MCF 10A (cell line): ENCODE measurements at regions of chr9 and their contacts with region 1.

Region 1: DNA sequence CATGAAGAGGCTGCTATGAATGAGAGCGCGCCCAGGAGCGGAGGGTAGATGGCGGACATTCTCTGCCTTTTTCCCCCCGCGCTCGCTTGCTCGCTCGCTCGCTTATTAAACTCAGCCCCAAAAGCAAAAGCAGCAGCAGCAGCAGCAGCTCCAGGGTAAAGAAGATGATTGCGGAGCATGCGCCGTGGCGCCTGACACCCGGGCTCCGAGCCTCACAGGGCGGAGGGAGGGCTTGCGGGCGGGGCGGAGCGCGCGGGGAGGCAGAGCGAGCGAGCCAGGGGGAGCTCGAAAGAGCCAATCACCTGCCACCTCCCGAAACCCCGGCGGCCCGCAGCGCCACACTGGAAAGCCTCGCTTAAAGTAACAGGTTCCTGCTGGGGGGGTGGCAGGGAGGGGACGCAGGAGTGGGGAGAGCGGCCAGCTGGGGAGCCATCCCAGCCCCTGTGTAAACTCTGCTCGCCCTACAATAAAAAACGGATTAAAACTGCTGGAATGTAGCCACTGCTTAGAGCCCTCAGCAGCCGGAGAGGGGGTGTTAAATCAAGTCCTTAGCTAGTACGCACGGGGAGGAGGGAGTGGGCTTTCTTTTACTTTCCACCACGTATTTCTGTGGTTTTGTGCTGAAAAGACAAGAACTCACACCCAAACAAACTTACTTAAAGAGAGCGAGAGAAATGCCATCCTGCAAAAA is at the start of gene MLLT3:
- DNase-seq: peak; percentile 90
- H3K4me3 Mint-ChIP-seq: peak within 1 kb of the TSS; percentile 81
- H3K27ac Mint-ChIP-seq: peak within 1 kb of the TSS; percentile 42
- H3K4me1 Mint-ChIP-seq: peaks cover 20% of the 10 kb centered on the region
- H3K27me3 Mint-ChIP-seq: peaks cover 50% of the 10 kb centered on the region
- CTCF ChIP-seq: no peak
- total RNA-seq, gene MLLT3: 0.66 and 1.2 TPM in 2 replicates

Region 2: DNA sequence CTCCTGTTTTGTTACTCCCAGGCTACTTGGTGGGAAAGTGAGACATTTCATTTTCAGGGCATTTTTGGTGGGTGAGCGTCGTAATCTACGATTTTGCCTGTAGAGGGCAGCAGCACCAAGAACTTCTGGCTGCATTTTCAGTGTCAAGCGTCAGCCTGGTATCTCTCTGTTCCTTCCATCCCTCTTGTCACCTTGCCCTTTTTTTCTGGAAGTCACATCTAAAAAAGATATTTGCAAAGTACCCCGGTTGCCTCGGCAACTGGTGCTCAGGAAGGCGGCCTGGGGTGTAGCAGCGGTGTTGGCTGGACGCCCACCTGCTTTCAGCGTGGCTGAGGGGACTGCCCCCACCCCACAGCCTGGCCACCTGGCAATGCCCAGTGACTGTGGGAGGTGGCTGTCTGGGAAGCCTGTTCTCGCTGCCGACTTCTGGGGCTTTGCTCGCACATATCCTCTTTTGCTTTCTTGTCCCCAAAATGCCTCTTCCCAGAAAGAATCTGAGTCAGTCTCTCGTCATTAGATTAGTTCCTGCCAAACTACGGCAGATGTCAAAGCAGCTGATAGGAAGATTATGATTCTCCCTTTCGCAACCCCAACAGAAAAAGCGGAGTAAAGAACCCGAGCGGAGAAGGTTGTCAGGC is 1129.2 kb before region 1 on chr9:
- CTCF ChIA-PET with region 1: no interaction called
- POLR2A ChIA-PET with region 1: no interaction called
- intact Hi-C with region 1: loop called (anchors 10 kb)
- DNase-seq: peak; percentile 67
- H3K4me3 Mint-ChIP-seq: peak overlapping the region; percentile 72
- H3K27ac Mint-ChIP-seq: no peak overlapping the region
- H3K4me1 Mint-ChIP-seq: peaks cover 16% of the 10 kb centered on the region
- H3K27me3 Mint-ChIP-seq: peaks cover 19% of the 10 kb centered on the region
- CTCF ChIP-seq: peak; percentile 81

Region 3: GRCh38 chr9:20356403-20357035 is 266.0 kb before region 1 on chr9:
- CTCF ChIA-PET with region 1: interaction called, 10 read pairs
- POLR2A ChIA-PET with region 1: interaction called, 4 read pairs
- intact Hi-C with region 1: loop called (anchors 1 kb)
- DNase-seq: peak; percentile 70
- H3K4me3 Mint-ChIP-seq: no peak overlapping the region
- H3K27ac Mint-ChIP-seq: no peak overlapping the region
- H3K4me1 Mint-ChIP-seq: peaks cover 8% of the 10 kb centered on the region
- H3K27me3 Mint-ChIP-seq: no peaks in the 10 kb centered on the region
- CTCF ChIP-seq: peak; percentile 76

Region 4: DNA sequence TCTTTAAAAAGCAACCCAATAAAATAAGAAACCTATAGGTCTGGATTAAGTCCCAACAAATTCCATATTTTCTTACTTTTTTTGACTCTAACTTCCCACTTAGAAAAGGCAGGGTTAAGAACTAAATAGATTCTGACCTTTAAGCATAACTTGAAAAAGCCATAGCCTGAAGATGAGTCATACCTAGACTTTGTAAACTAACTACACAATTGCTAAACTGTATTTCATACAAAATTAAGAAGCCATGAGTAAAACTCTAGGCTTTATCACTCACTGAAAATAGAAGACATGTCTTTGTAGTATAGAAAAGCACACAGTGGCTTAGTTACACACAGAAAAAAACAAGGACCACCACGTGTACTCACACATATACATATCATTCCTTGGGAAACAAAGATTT is 51.7 kb before region 1 on chr9:
- CTCF ChIA-PET with region 1: no interaction called
- POLR2A ChIA-PET with region 1: no interaction called
- intact Hi-C with region 1: no loop called
- DNase-seq: peak; percentile 17
- H3K4me3 Mint-ChIP-seq: no peak overlapping the region
- H3K27ac Mint-ChIP-seq: no peak overlapping the region
- H3K4me1 Mint-ChIP-seq: no peaks in the 10 kb centered on the region
- H3K27me3 Mint-ChIP-seq: peaks cover 22% of the 10 kb centered on the region
- CTCF ChIP-seq: no peak

Region 5: DNA sequence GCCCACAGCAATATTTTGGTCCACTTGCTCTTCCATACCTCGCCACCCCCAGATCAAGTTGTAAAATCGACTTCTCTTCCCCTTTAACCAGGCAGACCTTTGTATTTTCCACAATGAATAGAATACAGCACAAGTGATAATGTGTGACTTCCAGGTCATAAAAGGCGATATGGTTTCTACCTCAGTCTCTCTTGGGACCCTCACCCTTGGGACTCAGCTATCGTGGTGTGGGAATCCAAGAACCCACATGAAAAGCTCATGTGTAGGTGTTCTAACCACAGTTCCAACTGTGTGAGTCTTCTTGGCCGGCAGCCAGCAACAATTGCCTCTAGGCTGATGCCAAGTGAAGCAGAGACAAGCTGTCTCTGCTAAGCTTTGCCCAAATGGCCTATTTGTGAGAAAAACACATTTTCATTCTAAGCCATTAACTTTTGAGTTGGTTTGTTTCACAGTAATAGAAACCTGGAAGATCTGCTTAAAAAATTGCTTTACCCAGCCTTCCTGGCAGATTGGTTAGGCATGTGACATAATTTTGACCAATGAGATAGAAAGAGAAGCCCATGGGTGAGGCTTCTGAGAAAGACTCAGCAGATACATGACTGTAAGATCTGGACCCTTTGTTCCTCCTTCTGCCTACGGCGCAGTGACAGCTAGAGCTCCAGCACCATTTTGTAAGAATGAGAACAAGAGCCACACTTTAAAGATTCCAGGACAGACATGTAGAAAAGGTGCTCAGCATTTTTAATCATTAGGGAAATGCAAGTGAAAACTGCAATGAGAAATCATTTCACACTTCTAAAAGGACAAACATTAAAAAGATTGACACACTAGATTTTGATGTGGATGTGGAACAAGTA is 18.1 kb after region 1 on chr9:
- CTCF ChIA-PET with region 1: interaction called, 19 read pairs
- POLR2A ChIA-PET with region 1: interaction called, 3 read pairs
- intact Hi-C with region 1: no loop called
- DNase-seq: peak; percentile 89
- H3K4me3 Mint-ChIP-seq: no peak overlapping the region
- H3K27ac Mint-ChIP-seq: no peak overlapping the region
- H3K4me1 Mint-ChIP-seq: peaks cover 6% of the 10 kb centered on the region
- H3K27me3 Mint-ChIP-seq: peaks cover 68% of the 10 kb centered on the region
- CTCF ChIP-seq: no peak

Region 6: GRCh38 chr9:20684035-20684872 is 61.8 kb after region 1 on chr9 and contains the start of gene FOCAD:
- CTCF ChIA-PET with region 1: interaction called, 24 read pairs
- POLR2A ChIA-PET with region 1: interaction called, 52 read pairs
- intact Hi-C with region 1: loop called (anchors 2 kb)
- DNase-seq: peak; percentile 95
- H3K4me3 Mint-ChIP-seq: peak within 1 kb of the TSS; percentile 82
- H3K27ac Mint-ChIP-seq: peak within 1 kb of the TSS; percentile 73
- H3K4me1 Mint-ChIP-seq: peaks cover 22% of the 10 kb centered on the region
- H3K27me3 Mint-ChIP-seq: no peaks in the 10 kb centered on the region
- CTCF ChIP-seq: no peak
- total RNA-seq, gene FOCAD: 20.7 and 23.6 TPM in 2 replicates

Region 7: DNA sequence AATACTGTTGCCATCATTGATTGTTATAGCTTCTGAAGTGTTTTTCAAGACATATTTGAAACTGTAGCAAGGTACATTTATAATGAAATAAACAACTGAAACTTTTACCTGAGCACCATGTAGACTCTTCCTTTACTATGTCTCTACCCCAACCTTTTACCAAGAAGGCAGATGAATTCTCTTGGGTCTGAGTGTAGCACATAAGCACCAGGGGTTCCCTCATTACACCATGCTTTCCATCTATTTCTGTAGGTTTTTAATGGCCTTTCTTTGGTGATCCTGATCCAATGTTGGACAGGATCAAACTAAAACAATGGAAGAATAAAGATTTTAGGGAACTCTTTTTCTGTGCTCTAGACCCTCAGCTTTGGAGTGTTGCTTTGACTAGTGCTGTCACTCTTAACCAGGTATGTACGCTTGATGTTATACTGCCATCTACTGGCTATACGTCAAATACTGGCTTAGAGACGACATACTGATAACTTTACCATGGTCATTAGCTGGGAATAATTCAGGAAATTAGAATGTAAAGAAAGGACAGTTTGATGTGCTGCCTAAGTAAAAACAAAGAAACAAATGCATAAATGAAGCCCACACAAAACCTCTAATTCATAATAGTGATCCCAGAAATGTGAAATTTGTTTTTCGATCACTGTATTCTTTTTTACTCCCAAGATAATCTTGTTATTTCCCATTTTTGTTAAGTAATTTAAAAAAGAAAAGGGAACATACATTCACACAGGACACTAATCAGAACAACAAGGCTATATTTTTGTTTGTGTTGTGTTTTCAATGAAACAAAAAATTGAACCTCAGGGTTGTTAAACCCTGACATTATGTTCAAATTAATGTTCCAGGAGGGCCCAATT is 488.5 kb after region 1 on chr9:
- CTCF ChIA-PET with region 1: no interaction called
- POLR2A ChIA-PET with region 1: no interaction called
- intact Hi-C with region 1: loop called (anchors 1 kb)
- DNase-seq: peak; percentile 63
- H3K4me3 Mint-ChIP-seq: no peak overlapping the region
- H3K27ac Mint-ChIP-seq: no peak overlapping the region
- H3K4me1 Mint-ChIP-seq: no peaks in the 10 kb centered on the region
- H3K27me3 Mint-ChIP-seq: peaks cover 25% of the 10 kb centered on the region
- CTCF ChIP-seq: peak; percentile 42